ENCODE measurements at regions of chr1 and their contacts with region 1.

Region 1: DNA sequence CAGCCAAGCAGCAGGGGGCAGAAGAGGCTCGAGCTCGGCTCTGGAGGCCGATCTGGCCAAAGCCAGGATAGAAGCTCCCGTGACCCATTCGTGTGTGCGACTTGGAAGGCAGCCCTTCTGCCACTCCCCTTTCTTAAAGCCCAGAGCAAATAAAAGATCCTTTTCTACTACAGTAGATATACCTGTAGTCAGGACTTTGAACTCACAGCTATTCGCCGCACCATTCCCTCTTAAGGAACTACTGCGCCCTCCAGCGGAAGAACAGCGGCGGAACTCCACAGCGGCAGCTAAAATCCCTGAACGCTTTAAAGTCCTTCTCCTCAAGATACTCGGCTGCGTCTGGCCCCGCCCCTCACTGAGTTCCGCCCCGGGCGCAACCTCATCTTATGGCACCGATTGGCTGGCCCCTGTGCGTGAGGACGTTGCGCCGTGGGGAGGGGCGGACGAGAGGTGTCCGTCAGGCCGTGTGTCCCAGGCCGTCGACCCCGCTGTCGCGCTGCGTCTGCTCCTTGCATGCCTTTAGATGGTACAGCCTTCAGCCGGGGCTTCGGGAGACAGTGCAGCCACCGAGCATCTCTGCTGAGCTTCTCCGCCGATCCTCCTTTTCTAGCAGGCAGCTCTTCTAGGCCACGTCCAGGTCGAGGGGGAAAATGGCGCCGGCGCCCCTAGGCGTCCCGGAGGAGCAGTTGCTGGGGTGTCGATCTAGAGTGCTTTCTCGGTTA is at the start of gene LRIG2:
- DNase-seq: peak; percentile 96
- ATAC-seq: peak; percentile 96
- H3K4me3 Mint-ChIP-seq: peak within 1 kb of the TSS; percentile 95
- H3K27ac Mint-ChIP-seq: peak within 1 kb of the TSS; percentile 95
- H3K4me1 Mint-ChIP-seq: peaks cover 31% of the 10 kb centered on the region
- H3K27me3 Mint-ChIP-seq: no peaks in the 10 kb centered on the region
- CTCF ChIP-seq: peak; percentile 49
- total RNA-seq, gene LRIG2: 23.8 and 30.7 TPM in 2 replicates

Region 2: DNA sequence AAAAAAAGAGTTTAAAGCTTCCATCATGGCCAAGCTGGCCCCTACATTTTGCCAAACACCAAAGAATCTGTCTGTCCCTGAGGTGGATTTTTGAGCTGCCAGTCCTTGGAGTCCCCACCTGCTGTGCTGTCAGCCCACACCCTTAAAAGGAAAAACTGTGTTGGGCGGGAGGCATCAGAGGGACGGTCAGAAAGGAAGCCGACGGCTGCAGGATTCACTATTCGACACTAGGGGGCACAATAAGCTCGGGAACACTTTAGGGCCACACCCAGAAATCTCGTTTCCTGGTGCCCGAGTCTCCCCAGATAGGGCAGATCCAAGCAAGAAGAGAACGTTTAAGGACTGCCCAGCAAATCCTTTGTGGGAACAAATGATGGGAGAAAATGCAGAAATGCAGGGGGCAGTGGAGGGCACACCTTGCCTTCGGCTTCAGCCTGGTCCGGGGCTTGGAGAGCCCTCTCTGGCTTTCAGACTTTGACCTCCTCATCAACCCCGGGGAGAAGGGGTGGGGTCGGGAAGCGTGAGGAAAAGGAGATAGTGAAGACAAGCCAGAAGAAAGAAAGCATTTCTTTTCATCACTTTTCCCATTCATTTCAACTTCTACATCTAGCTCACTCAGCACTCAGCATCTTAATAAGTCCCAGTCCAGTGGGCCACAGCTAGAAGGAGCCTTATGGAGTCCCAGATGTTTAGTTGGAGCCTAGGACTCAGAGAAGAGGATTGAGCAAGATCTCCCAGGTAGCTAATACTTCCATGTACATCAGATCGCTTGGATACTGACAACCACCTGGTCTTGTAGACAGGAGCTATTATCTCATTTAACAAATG is 681.9 kb before region 1 on chr1:
- CTCF ChIA-PET with region 1: interaction called, 5 read pairs
- POLR2A ChIA-PET with region 1: no interaction called
- intact Hi-C with region 1: loop called (anchors 2 kb)
- DNase-seq: peak; percentile 66
- ATAC-seq: peak; percentile 88
- H3K4me3 Mint-ChIP-seq: peak overlapping the region; percentile 66
- H3K27ac Mint-ChIP-seq: peak overlapping the region; percentile 46
- H3K4me1 Mint-ChIP-seq: peaks cover 31% of the 10 kb centered on the region
- H3K27me3 Mint-ChIP-seq: peaks cover 14% of the 10 kb centered on the region
- CTCF ChIP-seq: peak; percentile 89

Region 3: GRCh38 chr1:112501810-112502641 is 570.9 kb before region 1 on chr1:
- CTCF ChIA-PET with region 1: no interaction called
- POLR2A ChIA-PET with region 1: no interaction called
- intact Hi-C with region 1: no loop called
- DNase-seq: peak; percentile 51
- ATAC-seq: peak; percentile 69
- H3K4me3 Mint-ChIP-seq: peak overlapping the region; percentile 70
- H3K27ac Mint-ChIP-seq: no peak overlapping the region
- H3K4me1 Mint-ChIP-seq: peaks cover 34% of the 10 kb centered on the region
- H3K27me3 Mint-ChIP-seq: peaks cover 51% of the 10 kb centered on the region
- CTCF ChIP-seq: no peak

Region 4: GRCh38 chr1:112809253-112809684 is 263.6 kb before region 1 on chr1:
- CTCF ChIA-PET with region 1: interaction called, 3 read pairs
- POLR2A ChIA-PET with region 1: no interaction called
- intact Hi-C with region 1: loop called (anchors 2 kb)
- DNase-seq: peak; percentile 53
- ATAC-seq: peak; percentile 75
- H3K4me3 Mint-ChIP-seq: no peak overlapping the region
- H3K27ac Mint-ChIP-seq: no peak overlapping the region
- H3K4me1 Mint-ChIP-seq: no peaks in the 10 kb centered on the region
- H3K27me3 Mint-ChIP-seq: peaks cover 2% of the 10 kb centered on the region
- CTCF ChIP-seq: peak; percentile 15

Region 5: DNA sequence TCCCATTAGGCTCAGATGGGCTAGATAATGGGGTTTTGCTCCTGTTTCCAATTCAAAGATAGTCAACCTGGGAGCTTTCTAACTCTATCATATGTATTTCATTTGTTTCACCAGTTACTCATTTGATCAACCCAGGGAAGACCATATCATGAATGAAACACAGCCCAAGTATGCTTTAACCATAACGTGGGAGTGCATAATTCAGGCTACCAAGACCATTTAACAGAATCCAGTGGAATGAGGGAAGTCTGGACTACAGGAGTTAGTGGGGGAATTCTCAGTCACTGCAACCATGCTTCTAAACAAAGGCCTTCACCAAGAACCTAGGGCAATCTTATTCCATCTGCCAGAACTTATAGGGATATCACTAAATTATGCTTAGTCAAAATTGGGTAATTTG is 101.9 kb before region 1 on chr1:
- CTCF ChIA-PET with region 1: no interaction called
- POLR2A ChIA-PET with region 1: no interaction called
- intact Hi-C with region 1: no loop called
- DNase-seq: no peak
- ATAC-seq: no peak
- H3K4me3 Mint-ChIP-seq: no peak overlapping the region
- H3K27ac Mint-ChIP-seq: no peak overlapping the region
- H3K4me1 Mint-ChIP-seq: no peaks in the 10 kb centered on the region
- H3K27me3 Mint-ChIP-seq: no peaks in the 10 kb centered on the region
- CTCF ChIP-seq: no peak

Region 6: GRCh38 chr1:113042285-113043143 is 30.4 kb before region 1 on chr1:
- CTCF ChIA-PET with region 1: interaction called, 13 read pairs
- POLR2A ChIA-PET with region 1: interaction called, 8 read pairs
- intact Hi-C with region 1: no loop called
- DNase-seq: peak; percentile 20
- ATAC-seq: peak; percentile 77
- H3K4me3 Mint-ChIP-seq: peak overlapping the region; percentile 46
- H3K27ac Mint-ChIP-seq: peak overlapping the region; percentile 30
- H3K4me1 Mint-ChIP-seq: peaks cover 27% of the 10 kb centered on the region
- H3K27me3 Mint-ChIP-seq: peaks cover 6% of the 10 kb centered on the region
- CTCF ChIP-seq: no peak

Region 7: DNA sequence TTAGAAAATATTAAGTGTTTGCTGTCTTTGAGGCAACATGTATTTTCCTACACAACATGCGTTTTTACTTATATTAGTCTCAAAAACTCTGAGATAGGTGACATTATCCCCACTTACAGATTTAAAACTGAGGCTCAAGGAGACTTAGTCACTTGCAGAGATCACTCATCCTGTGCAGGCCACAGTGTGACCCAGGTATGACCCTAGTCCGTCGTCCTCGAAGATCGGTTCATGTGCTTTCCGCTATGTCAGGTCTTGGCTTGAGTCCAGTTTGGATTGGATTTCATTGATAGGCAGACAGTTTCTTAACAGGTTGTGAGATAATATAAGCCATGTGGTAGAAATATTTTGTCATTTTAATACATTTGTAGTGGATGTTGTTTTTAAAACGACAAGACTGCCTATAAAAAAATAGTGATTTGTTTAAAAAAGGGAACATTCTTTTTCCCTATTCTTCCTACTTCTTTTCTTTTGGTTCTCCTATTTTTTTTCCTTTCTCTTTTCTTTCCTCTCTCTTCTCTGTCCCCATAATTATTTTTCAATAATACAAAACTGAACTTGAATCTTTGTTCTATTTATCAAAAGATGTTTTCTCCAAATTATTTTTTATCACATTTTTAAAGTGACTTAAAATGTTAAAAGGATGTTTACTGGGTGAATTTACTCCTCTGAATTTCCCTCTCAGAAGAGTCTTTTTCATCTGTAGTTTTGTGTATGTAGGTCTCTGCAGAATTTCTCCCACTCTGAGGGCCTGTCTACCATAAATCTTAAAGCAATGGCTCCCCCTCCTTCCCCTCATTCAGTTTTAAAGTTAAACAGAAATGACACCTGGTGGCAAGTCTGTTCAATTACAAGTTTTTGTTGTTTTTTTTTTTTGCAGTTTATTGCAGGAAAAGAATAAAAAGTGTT is 604.6 kb after region 1 on chr1:
- CTCF ChIA-PET with region 1: interaction called, 6 read pairs
- POLR2A ChIA-PET with region 1: no interaction called
- intact Hi-C with region 1: loop called (anchors 2 kb)
- DNase-seq: no peak
- ATAC-seq: peak; percentile 34
- H3K4me3 Mint-ChIP-seq: no peak overlapping the region
- H3K27ac Mint-ChIP-seq: no peak overlapping the region
- H3K4me1 Mint-ChIP-seq: no peaks in the 10 kb centered on the region
- H3K27me3 Mint-ChIP-seq: no peaks in the 10 kb centered on the region
- CTCF ChIP-seq: no peak

Region 8: GRCh38 chr1:114511032-114511785 is 1438.3 kb after region 1 on chr1 and contains the start of gene TRIM33:
- CTCF ChIA-PET with region 1: no interaction called
- POLR2A ChIA-PET with region 1: interaction called, 5 read pairs
- intact Hi-C with region 1: loop called (anchors 5 kb)
- DNase-seq: peak; percentile 93
- ATAC-seq: peak; percentile 73
- H3K4me3 Mint-ChIP-seq: peak within 1 kb of the TSS; percentile 98
- H3K27ac Mint-ChIP-seq: peak within 1 kb of the TSS; percentile 99
- H3K4me1 Mint-ChIP-seq: peaks cover 48% of the 10 kb centered on the region
- H3K27me3 Mint-ChIP-seq: no peaks in the 10 kb centered on the region
- CTCF ChIP-seq: no peak
- total RNA-seq, gene TRIM33: 38.4 and 41.2 TPM in 2 replicates